Ascending aorta (tissue), 2 donors: ENCODE measurements at regions of chr9 and their contacts with region 1.

Region 1: DNA sequence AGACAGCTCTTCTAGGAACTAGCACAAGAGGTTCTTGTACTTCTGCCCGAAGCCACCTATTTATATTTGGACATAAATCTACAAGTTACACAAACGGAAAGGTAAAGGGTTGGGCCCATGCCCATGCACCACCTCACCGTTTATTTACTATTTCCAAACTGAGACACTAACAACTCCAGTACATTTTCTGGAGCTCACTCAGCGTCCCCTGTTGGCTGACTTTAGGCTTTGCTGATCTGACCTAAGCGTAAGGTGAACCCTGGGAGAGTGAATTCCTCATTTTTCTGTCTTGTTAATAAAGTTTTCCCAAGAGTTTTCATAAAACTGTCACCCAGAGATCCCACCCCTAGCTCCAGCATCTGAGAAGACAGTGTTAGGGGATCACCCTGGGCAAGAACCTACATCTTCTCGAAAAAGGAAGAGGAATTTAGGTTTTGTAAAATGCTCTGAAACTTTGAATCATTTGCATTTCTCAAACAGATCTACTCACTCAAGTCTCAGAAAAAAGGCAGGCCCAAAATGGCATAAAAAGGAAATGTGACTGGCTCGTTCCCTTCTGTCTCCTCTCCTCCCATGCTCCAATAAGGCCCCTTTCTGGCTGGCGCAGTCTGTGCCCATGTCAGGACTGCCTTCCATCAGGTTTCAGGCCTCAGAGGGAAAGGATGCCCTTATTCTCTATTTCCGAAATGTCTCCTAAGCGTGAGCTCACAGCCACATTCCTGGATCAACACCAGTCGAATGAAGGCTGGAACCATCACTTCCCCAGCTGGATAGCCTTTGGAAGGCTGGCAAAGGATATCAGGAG is 201.3 kb downstream of the FANCC start:
- DNase-seq: peak in 1 of 2 donors; percentile 59
- H3K4me3 ChIP-seq: no peak overlapping the region
- H3K27ac ChIP-seq: peak overlapping the region; percentile 59 to 75
- H3K4me1 ChIP-seq: peaks cover 12 to 43% of the 10 kb centered on the region in 2 donors
- H3K27me3 ChIP-seq: no peaks in the 10 kb centered on the region
- CTCF ChIP-seq: peak in 2 of 3 experiments; percentile 20 to 36

Region 2: GRCh38 chr9:94867281-94867841 is 248.8 kb before region 1 on chr9:
- intact Hi-C with region 1: loop called (anchors 5 kb)
- DNase-seq: peak; percentile 39 to 85
- H3K4me3 ChIP-seq: peak overlapping the region; percentile 2 to 31
- H3K27ac ChIP-seq: peak overlapping the region; percentile 80 to 83
- H3K4me1 ChIP-seq: peaks cover 13 to 54% of the 10 kb centered on the region in 2 donors
- H3K27me3 ChIP-seq: no peaks in the 10 kb centered on the region
- CTCF ChIP-seq: no peak

Region 3: GRCh38 chr9:95103851-95104580 is 12.2 kb before region 1 on chr9:
- intact Hi-C with region 1: loop called (anchors 2 kb)
- DNase-seq: no peak
- H3K4me3 ChIP-seq: no peak overlapping the region
- H3K27ac ChIP-seq: peak overlapping the region; percentile 84 to 95
- H3K4me1 ChIP-seq: peaks cover 49 to 92% of the 10 kb centered on the region in 2 donors
- H3K27me3 ChIP-seq: no peaks in the 10 kb centered on the region
- CTCF ChIP-seq: no peak